ENCODE measurements at regions of chr3 and their contacts with region 1.

Region 1: GRCh38 chr3:107206141-107206540 is 171.1 kb upstream of the CCDC54 start:
- DNase-seq: peak; percentile 86
- ATAC-seq: peak; percentile 44
- H3K4me3 ChIP-seq: no peak overlapping the region
- H3K27ac ChIP-seq: no peak overlapping the region
- H3K4me1 ChIP-seq: peaks cover 25% of the 10 kb centered on the region
- H3K27me3 ChIP-seq: no peaks in the 10 kb centered on the region
- CTCF ChIP-seq: peak; percentile 91

Region 2: GRCh38 chr3:106114848-106115247 is 1091.3 kb before region 1 on chr3:
- CTCF ChIA-PET with region 1: no interaction called
- POLR2A ChIA-PET with region 1: no interaction called
- intact Hi-C with region 1: no loop called
- DNase-seq: peak; percentile 81
- ATAC-seq: peak; percentile 82
- H3K4me3 ChIP-seq: no peak overlapping the region
- H3K27ac ChIP-seq: peak overlapping the region; percentile 91
- H3K4me1 ChIP-seq: peaks cover 65% of the 10 kb centered on the region
- H3K27me3 ChIP-seq: no peaks in the 10 kb centered on the region
- CTCF ChIP-seq: no peak

Region 3: DNA sequence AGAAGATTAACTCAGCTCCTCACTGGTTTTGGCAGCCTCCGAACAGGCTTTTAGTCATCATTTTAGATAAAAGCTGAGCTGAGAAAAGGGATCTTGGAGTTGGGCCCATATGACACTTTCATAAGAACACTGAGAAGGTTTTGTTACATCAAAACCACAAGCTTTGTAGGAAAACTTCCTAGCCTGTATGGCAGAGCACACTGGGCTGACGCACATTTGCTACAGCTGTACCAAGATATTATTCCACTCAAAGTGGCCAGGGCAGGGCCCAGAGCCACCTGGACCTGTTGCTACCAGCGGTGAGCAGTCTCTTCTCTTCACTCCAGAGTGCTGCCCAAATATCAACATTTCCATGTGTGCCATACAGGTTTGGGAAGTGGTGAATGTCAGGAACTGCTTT is 10.6 kb after region 1 on chr3:
- CTCF ChIA-PET with region 1: interaction called, 4 read pairs
- POLR2A ChIA-PET with region 1: no interaction called
- intact Hi-C with region 1: loop called (anchors 1 kb)
- DNase-seq: peak; percentile 91
- ATAC-seq: peak; percentile 89
- H3K4me3 ChIP-seq: peak overlapping the region; percentile 41
- H3K27ac ChIP-seq: peak overlapping the region; percentile 95
- H3K4me1 ChIP-seq: peaks cover 43% of the 10 kb centered on the region
- H3K27me3 ChIP-seq: no peaks in the 10 kb centered on the region
- CTCF ChIP-seq: no peak

Region 4: DNA sequence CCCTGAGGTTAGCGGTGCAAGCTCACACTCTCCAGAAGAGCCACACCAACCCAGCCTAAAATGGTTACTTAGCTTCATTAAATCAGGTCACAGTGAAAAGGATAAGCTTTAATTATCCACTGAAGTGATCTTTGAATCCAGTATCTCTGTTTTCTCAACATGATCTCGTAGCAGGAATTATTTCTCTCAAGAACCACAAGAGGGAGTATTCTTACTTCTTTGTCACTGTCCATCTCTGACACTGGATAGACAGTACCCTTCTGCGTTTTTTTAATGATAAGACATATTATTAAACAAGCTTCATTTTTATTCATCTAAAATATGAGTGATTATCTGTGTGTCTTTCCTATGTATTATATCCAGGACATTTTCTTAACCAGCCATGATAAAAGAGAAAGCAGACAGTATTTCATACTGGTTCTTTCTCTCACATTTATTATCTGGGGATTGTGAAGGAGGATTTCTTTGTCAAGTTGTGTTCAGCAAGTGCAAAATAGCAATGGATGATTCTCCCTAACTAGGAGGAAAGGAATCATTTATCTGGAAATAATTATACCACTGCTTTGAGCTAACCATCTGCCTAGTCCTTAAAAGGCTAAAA is 65.7 kb after region 1 on chr3:
- CTCF ChIA-PET with region 1: interaction called, 3 read pairs
- POLR2A ChIA-PET with region 1: no interaction called
- intact Hi-C with region 1: loop called (anchors 1 kb)
- DNase-seq: peak; percentile 60
- ATAC-seq: peak; percentile 88
- H3K4me3 ChIP-seq: no peak overlapping the region
- H3K27ac ChIP-seq: no peak overlapping the region
- H3K4me1 ChIP-seq: no peaks in the 10 kb centered on the region
- H3K27me3 ChIP-seq: no peaks in the 10 kb centered on the region
- CTCF ChIP-seq: peak; percentile 92

Region 5: DNA sequence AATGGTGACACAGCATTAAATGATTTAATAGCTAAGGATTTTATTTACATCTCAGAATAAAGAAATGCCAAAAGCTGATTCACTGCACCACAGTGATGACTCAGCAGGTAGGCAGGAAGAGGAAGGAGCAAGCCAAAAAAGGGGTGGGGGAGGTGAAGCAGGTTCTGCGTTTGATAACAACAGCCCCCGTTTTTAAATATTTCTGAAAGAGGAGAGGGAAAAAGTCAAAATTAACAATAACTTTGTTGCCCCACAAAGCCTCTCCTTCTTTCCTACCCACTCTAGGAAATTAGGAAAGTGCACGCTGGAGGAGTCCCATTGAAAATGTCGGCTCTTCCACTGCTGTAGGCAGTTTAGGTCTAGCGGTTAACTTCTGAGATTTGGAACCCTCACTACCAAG is 161.2 kb after region 1 on chr3:
- CTCF ChIA-PET with region 1: no interaction called
- POLR2A ChIA-PET with region 1: no interaction called
- intact Hi-C with region 1: loop called (anchors 5 kb)
- DNase-seq: peak; percentile 95
- ATAC-seq: peak; percentile 86
- H3K4me3 ChIP-seq: peak overlapping the region; percentile 32; the same call in 1 of the 2 replicates
- H3K27ac ChIP-seq: peak overlapping the region; percentile 70
- H3K4me1 ChIP-seq: peaks cover 21% of the 10 kb centered on the region
- H3K27me3 ChIP-seq: no peaks in the 10 kb centered on the region
- CTCF ChIP-seq: no peak

Region 6: DNA sequence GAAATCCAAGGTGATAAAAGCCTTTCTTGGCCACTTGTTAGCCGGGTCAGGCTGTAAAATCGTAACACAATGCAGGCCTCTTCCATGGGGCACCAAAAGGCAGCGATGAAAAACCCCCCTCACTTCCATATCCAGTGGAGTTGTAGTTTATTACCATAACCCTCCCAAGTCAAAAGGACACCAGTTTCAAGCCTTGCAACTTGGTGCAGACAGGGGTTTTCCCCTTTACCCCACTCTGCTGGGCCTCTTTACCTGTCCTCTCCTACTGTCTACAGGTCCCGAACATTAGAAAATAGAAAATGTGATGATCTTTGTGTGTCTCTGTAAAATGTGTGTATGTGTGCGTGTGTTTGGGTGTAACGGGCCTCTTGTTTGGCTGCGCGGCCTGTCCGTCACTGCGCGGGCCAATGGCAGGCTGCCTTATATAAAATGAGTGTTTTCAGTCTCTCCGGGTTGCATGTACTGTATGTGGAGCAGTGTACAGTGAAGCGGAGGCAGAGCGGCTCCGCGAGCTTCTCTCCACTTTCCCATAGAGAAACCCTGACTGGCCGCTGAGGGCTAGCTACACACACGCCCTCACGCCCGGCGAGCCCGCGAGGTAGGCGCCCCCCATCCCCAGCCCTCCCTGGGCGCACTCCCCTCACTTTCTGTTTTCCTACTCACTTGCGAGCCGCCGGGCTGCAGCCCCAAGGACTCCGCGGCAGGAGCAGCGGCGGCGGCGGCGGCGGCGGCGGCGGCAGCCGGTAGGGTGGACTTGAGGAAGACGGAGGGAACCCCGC is 316.6 kb after region 1 on chr3 and contains the start of gene BBX:
- CTCF ChIA-PET with region 1: no interaction called
- POLR2A ChIA-PET with region 1: no interaction called
- intact Hi-C with region 1: loop called (anchors 5 kb)
- DNase-seq: peak; percentile 93
- ATAC-seq: peak; percentile 83
- H3K4me3 ChIP-seq: peak within 1 kb of the TSS; percentile 90
- H3K27ac ChIP-seq: peak within 1 kb of the TSS; percentile 12; the same call in 1 of the 2 replicates
- H3K4me1 ChIP-seq: peaks cover 14% of the 10 kb centered on the region
- H3K27me3 ChIP-seq: no peaks in the 10 kb centered on the region
- CTCF ChIP-seq: no peak
- total RNA-seq, gene BBX: 45.8 and 66.8 TPM in 2 replicates

Region 7: GRCh38 chr3:107690522-107691138 is 484.5 kb after region 1 on chr3:
- CTCF ChIA-PET with region 1: interaction called, 12 read pairs
- POLR2A ChIA-PET with region 1: no interaction called
- intact Hi-C with region 1: no loop called
- DNase-seq: peak; percentile 84
- ATAC-seq: peak; percentile 77
- H3K4me3 ChIP-seq: no peak overlapping the region
- H3K27ac ChIP-seq: no peak overlapping the region
- H3K4me1 ChIP-seq: no peaks in the 10 kb centered on the region
- H3K27me3 ChIP-seq: no peaks in the 10 kb centered on the region
- CTCF ChIP-seq: peak; percentile 72

Measured in PC-3 (cell line).